ENCODE measurements at regions of chr2 and their contacts with region 1.

Region 1: DNA sequence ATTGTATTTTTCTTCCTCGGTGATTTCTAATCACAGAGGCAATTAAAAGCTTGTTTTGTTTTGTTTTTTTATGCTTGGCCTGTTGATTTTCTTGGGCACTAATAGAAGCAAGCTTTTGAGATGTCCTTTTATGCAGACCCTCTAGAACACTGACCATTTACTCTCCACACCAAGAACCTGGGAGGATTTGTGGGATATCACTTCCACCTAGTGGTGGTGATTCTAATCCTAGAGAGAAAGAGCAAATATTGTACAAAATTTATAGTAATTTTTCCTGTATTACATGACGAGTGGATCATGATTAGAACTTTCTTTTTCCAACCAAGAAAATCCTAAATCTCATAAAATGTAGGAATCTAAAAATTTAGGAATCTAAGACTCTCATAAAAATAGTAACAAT is 23.4 kb downstream of the NEMP2 start:
- DNase-seq: peak in 1 of 2 experiments; percentile 36
- H3K4me3 ChIP-seq: no peak overlapping the region
- H3K4me3 Mint-ChIP-seq: no peak overlapping the region
- H3K27ac Mint-ChIP-seq: no peak overlapping the region
- H3K4me1 ChIP-seq: no peaks in the 10 kb centered on the region
- H3K4me1 Mint-ChIP-seq: no peaks in the 10 kb centered on the region
- H3K27me3 ChIP-seq: no peaks in the 10 kb centered on the region
- H3K27me3 Mint-ChIP-seq: no peaks in the 10 kb centered on the region
- CTCF ChIP-seq: peak; percentile 42 to 60

Region 2: GRCh38 chr2:190334479-190335224 is 176.5 kb before region 1 on chr2:
- CTCF ChIA-PET with region 1: interaction called, 3 read pairs
- POLR2A ChIA-PET with region 1: no interaction called
- intact Hi-C with region 1: loop called (anchors 2 kb)
- DNase-seq: peak; percentile 60 to 74
- H3K4me3 ChIP-seq: peak overlapping the region; percentile 11; the same call in 1 of the 2 replicates
- H3K4me3 Mint-ChIP-seq: peak overlapping the region; percentile 61
- H3K27ac Mint-ChIP-seq: peak overlapping the region; percentile 32
- H3K4me1 ChIP-seq: peaks cover 23% of the 10 kb centered on the region
- H3K4me1 Mint-ChIP-seq: peaks cover 16% of the 10 kb centered on the region
- H3K27me3 ChIP-seq: no peaks in the 10 kb centered on the region
- H3K27me3 Mint-ChIP-seq: no peaks in the 10 kb centered on the region
- CTCF ChIP-seq: no peak

Region 3: GRCh38 chr2:190343500-190344275 is 167.4 kb before region 1 on chr2 and contains the start of gene INPP1:
- CTCF ChIA-PET with region 1: no interaction called
- POLR2A ChIA-PET with region 1: no interaction called
- intact Hi-C with region 1: loop called (anchors 1 kb)
- DNase-seq: peak; percentile 63 to 71
- H3K4me3 ChIP-seq: peak within 1 kb of the TSS; percentile 76
- H3K4me3 Mint-ChIP-seq: peak within 1 kb of the TSS; percentile 95
- H3K27ac Mint-ChIP-seq: peak within 1 kb of the TSS; percentile 91
- H3K4me1 ChIP-seq: no peaks in the 10 kb centered on the region
- H3K4me1 Mint-ChIP-seq: no peaks in the 10 kb centered on the region
- H3K27me3 ChIP-seq: no peaks in the 10 kb centered on the region
- H3K27me3 Mint-ChIP-seq: no peaks in the 10 kb centered on the region
- CTCF ChIP-seq: no peak
- total RNA-seq, gene INPP1: 23.2 TPM in 2 replicates

Region 4: GRCh38 chr2:190382851-190383250 is 128.3 kb before region 1 on chr2:
- CTCF ChIA-PET with region 1: no interaction called
- POLR2A ChIA-PET with region 1: no interaction called
- intact Hi-C with region 1: loop called (anchors 1 kb)
- DNase-seq: peak; percentile 48 to 61
- H3K4me3 ChIP-seq: no peak overlapping the region
- H3K4me3 Mint-ChIP-seq: no peak overlapping the region
- H3K27ac Mint-ChIP-seq: no peak overlapping the region
- H3K4me1 ChIP-seq: peaks cover 13% of the 10 kb centered on the region
- H3K4me1 Mint-ChIP-seq: peaks cover 7% of the 10 kb centered on the region
- H3K27me3 ChIP-seq: no peaks in the 10 kb centered on the region
- H3K27me3 Mint-ChIP-seq: no peaks in the 10 kb centered on the region
- CTCF ChIP-seq: peak; percentile 60 to 75